K562 (cell line): ENCODE measurements at regions of chr7 and their contacts with region 1.

Region 1: DNA sequence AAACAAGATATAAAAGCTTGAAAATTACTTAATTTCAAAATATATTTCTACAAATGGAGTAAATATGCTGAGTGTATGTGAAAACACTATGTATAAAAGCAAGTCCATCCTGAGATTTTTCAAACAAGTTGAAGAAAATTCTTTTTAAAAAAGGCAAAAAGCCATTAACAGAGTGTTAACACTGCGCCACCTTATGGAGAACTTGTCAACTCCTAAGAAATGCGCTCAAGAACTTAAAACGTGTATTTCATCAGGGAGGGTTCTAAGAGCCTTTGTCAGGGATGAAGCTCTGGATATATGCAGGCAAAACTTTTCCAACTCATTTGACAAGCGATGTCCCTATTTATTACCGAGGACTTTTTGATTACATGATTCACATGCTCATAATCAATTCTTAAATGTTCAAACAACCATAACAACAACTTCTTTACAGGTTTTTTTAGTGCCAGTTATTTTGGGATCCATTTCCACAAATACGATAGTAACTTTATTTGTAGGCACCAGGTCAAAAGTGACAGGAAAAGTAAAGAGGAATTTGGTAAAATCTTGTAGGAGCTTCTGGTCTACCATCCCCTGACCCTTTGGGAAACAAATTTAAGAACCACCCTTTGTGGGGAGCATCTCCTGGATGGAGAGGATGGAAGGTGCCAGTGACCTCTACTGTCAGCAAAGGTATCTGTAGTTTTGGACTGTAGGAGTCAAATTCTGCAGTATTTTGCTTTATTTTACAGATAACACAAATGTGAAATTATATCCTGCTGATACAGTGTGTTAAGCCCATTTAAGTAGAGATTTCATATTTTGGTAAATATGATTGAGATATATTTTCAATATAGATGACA is 23.2 kb downstream of the CALCR start:
- DNase-seq: peak in 3 of 4 experiments; percentile 15 to 62 (median 25)
- ATAC-seq: peak; percentile 91
- H3K4me3 ChIP-seq: no peak overlapping the region
- H3K27ac ChIP-seq: no peak overlapping the region
- H3K4me1 ChIP-seq: no peaks in the 10 kb centered on the region
- H3K27me3 ChIP-seq: 0 out of 5 replicates have a peak, but pooled peaks cover 3 to 4% of the 10 kb centered on the region in 2 experiments
- CTCF ChIP-seq: peak; percentile 56 to 73 (median 61); a peak in 5 of 6 replicates
- EP300 ChIP-seq: no peak
- POLR2A ChIP-seq: no peak
- RAD21 ChIP-seq: peak; percentile 56 to 69

Region 2: DNA sequence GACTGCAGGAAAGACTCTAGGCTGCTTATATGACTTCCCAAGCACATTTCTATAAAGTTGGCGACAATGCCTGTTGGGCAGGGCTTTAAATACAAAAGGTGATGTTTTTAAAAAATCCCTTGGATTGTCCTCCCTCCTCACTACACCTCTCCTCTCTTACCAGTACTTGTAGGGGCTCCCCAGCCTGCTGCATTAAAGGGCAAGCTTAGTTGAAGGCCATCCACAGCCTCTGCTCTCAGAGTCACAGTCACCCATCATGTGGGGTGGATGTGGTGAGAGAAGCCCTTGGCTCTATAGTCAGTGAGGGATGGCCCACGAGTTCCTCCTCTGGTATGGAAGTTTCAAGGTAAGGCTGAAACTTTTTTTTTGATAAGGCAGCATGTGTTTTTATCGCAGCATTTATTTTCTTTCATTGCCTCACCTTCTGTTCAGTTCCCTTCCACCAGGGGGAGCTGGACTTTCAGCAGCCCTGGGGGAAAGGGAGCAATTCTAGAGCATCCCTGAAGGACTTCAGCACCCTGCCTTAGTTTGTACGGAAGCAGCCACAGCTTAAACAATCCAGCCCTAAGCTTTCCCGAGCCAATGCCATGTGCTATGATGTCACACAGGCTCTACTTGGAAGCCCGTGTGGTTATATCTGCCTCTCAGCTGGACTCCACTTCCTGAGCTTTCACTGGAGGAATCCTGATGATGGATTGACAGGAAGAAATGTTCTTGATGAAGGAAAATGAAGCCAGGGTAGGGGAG is 108.6 kb before region 1 on chr7:
- CTCF ChIA-PET with region 1: interaction called, 5 read pairs
- POLR2A ChIA-PET with region 1: no interaction called
- in situ Hi-C with region 1: no loop called
- intact Hi-C with region 1: loop called (anchors 1 kb)
- DNase-seq: peak; percentile 57 to 69 (median 65)
- ATAC-seq: peak; percentile 94
- H3K4me3 ChIP-seq: no peak overlapping the region
- H3K27ac ChIP-seq: no peak overlapping the region
- H3K4me1 ChIP-seq: no peaks in the 10 kb centered on the region
- H3K27me3 ChIP-seq: no peaks in the 10 kb centered on the region
- CTCF ChIP-seq: peak; percentile 71 to 88 (median 77)
- EP300 ChIP-seq: no peak
- POLR2A ChIP-seq: no peak
- RAD21 ChIP-seq: peak; percentile 60 to 65